Panc1 (cell line): ENCODE measurements at regions of chr1 and their contacts with region 1.

Region 1: GRCh38 chr1:11478571-11479374 is at the start of gene DISP3:
- DNase-seq: no peak
- ATAC-seq: peak; percentile 92
- H3K4me3 ChIP-seq: peak within 1 kb of the TSS; percentile 61 to 67
- H3K27ac ChIP-seq: peak within 1 kb of the TSS; percentile 42; the same call in 1 of the 2 replicates
- H3K4me1 ChIP-seq: no peaks in the 10 kb centered on the region
- H3K27me3 ChIP-seq: peaks cover 8% of the 10 kb centered on the region
- CTCF ChIP-seq: peak; percentile 94
- total RNA-seq, gene DISP3: 1.1 TPM

Region 2: DNA sequence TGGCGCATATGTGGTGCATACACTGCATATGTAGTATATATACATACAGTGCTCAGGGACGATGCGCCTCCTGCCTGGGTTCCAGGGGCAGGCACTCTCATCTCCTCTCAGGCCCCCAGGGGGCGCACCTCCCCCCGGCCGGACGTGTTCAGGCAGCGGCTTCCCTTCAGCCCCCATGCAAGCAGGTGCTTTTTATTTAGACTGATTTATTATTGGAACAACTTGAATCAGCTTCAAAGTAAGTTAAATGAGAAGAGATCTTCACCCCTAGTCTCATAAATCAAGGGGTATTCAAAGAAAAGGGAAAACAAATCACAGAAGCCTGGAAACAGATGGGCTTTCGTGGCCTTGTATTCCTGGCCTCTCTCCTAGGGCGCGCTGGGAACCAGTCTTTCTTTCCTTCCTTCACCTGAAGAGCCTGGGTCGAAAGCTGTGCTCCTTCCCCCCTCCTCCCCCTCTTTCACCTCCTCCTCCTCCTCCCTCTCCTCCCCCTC is 141.1 kb before region 1 on chr1:
- CTCF ChIA-PET with region 1: no interaction called
- POLR2A ChIA-PET with region 1: no interaction called
- in situ Hi-C with region 1: no loop called
- intact Hi-C with region 1: loop called (anchors 10 kb)
- DNase-seq: peak; percentile 18
- ATAC-seq: peak; percentile 84
- H3K4me3 ChIP-seq: no peak overlapping the region
- H3K27ac ChIP-seq: no peak overlapping the region
- H3K4me1 ChIP-seq: no peaks in the 10 kb centered on the region
- H3K27me3 ChIP-seq: no peaks in the 10 kb centered on the region
- CTCF ChIP-seq: peak; percentile 91

Region 3: DNA sequence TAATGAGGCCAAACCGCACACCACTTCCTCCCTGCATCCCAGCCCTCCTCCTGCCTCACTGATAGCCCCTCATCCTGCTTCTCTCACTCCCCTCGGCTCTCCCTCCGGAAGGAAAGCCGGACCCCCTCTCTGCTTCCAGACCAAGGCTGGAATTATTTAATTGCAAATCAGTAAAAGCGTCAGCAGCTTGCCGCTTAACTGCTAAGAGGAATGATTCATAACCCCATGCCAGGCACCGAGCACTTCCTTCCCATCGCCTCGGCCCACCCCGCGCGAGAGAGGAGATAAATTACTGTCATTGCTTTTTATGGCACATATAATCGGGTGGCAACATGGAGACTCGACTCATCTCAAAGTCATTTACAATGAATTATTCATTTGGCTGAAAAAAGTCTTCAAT is 128.5 kb before region 1 on chr1:
- CTCF ChIA-PET with region 1: no interaction called
- POLR2A ChIA-PET with region 1: no interaction called
- in situ Hi-C with region 1: no loop called
- intact Hi-C with region 1: no loop called
- DNase-seq: no peak
- ATAC-seq: no peak
- H3K4me3 ChIP-seq: no peak overlapping the region
- H3K27ac ChIP-seq: no peak overlapping the region
- H3K4me1 ChIP-seq: no peaks in the 10 kb centered on the region
- H3K27me3 ChIP-seq: no peaks in the 10 kb centered on the region
- CTCF ChIP-seq: no peak